KBM-7 (cell line): ENCODE measurements at regions of chr12 and their contacts with region 1.

Region 1: DNA sequence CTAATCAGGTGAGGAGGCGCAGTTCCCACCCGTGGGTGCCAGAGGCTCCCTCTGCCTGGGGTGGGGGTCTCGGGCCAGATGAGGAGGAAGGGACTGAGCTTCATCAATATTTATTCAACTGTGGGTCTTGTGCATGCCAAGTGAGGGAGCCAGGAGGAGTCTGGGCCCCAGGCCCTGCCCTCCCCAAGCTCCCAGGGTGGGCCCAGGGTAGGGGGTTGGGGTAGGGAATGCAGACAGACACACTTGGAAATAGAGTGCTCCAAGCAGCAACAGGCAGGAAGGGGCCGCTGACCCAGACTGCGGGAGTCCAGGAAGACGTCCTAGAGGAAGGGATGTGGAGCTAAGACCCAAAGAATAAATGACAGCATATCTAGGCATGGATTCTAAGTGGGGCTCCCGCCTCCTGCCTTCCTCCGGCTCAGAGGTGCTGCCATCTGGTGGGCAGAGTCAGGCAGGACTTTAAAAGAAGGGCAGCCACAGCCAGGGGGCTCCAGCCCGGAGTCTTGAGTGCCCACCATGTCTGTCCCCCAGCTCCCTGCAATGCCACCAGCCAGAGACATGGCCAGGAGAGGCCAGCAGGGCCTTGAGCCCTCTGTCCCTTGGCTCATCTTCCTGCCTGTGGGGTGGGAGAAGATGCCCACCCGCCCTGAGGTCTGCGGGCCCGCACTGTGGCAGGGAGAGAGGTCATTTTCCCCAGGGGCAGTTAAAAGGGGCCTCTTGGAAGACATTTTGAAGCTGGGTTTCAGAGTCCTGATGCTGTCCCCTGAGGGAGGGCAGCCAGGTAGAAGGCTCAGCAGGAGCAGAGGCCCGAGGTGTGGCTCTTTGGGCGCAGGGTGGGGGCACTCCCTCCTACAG is 70.1 kb downstream of the PHETA1 start:
- DNase-seq: peak; percentile 53

Region 2: DNA sequence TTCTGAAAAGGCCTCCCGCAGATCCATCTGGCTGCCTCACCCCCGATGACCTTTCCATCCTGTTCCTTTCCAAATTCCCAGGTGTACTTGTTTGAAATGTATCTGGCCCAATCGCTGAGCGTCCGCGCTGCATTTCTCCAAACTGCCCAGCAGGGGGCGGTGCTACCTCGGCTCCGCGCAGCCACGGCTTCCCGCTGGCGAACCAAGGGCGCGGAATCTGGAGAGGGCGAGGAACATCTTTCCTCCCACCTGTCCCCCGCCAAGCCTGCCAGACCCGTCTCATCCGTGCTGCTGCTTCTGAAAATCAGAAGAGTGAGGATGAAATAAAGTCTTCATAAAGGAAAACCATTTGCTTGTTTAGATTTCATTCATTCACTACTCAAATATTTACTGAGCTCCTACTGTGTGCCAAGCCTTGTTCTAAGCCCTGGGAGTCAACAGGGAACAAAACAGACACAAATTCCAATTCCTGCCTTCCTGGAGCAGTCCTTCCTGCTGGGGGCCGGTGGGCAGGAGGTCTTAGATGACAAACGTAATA is 361.6 kb before region 1 on chr12:
- in situ Hi-C with region 1: loop called (anchors 10 kb)
- DNase-seq: peak; percentile 75

Region 3: DNA sequence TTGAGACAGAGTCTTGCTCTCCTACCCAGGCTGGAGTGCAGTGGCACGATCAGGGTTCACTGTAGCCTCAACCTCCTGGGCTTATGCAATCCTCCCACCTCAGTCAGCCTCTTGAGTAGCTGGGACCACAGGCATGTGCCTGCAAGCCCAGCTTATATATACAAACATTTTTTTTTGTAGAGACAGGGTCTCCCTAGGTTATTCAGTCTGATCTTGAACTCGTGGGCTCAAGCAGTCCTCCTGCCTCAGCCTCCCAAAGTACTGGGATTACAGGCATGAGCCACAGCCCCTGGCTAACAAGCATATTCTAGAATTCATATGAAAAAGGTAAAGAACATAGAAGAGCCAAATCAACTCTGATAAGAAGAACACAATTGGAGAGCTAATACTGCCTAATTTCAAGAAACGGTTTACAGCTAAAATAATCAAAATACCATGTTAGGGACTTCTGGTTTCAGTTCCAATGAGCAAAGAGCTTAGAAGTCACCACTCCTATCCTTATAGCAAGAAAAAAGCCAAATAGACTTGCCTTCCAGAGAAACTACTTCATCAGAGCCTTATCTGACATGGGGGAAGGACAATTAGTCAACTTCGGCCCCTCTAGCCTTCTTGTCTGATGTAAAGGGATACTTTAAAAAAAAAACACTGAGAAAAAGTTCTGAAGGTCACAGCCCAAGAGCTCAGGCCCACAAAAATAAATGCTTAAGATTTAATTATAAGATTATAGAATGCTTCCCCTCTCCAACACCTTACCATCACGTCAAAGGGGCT is 676.5 kb after region 1 on chr12:
- in situ Hi-C with region 1: no loop called
- DNase-seq: no peak